ENCODE measurements at regions of chr7 and their contacts with region 1.

Region 1: DNA sequence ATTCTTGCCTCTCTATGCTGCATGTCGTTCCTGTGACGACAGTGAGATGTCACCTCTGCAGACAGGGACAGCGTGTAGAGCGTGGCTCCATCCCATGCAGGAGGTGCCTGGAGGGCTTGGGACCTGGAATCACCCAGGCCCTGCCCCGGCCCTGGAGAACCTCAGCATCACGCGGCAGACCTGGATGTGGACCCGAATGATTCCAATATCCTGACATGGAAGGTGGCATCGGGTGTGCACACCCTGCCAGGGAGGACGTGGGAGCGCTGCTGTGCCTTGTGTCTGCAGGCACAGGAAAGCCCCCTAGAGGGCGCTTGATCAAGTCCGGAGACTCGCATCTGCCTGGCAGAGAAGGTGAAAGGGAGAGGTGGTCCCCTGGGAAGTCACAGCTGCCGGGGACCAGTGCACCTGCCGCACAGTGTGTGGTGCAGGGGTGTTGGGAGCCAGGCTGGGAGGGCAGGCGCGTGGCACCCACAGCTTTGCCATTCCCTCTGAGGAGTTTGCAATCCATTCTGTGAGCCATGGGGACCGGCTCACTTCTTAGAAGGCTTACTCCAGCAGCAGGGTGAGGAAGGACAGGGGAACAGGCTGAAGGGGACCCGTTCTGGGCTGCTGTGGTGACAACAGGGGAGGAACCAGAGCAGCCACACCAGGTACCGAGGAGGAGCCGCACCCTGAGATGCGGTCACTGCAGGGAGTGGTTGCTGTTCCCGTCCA is 45.2 kb upstream of the EN2 start:
- DNase-seq: peak in 9 of 10 donors; percentile 37 to 78 (median 53)
- H3K4me3 ChIP-seq: no peak overlapping the region
- H3K27ac ChIP-seq: no peak overlapping the region
- H3K27me3 ChIP-seq: peaks cover 0 to 52% (median 17%) of the 10 kb centered on the region in 45 donors
- CTCF ChIP-seq: peak in 55 of 56 donors; percentile 20 to 80 (median 67)

Region 2: DNA sequence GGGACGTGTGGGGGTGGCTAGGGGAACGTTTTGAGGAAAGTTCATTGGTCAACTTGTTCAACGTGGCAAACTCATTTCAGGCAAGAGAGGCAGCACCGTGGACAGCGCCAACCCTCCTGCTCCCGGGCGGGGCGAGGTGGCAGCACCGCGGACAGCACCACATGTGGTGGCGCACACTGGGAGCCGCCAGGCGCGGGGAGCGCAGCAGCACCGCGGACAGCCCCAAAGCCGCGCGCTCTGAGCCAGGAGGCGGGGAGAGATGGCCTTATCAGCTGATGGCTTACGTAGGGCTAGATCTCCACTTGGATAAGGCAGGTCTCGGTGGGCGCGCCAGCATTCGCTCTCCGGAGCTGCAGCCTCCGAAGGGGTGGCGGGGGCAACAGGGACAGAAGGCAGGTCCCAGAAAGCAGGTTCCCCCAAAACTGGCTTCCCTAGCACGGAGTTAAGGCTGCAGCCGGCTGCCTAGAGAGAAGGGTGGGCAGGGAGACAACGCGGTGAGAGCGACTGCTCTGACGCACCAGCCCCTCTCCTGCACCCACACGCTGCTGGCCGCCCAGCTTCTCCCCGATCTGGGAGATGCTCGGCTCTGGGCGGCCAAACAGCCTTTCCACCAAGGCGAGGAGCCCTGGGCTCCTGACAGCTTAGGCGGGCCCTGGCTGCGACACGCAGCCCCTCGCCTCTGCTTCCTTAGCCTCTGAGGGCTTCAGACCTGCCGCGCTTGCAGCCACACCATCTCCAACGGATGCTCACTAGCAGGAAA is 342.5 kb before region 1 on chr7 and contains the start of gene HTR5A:
- intact Hi-C with region 1: no loop called
- DNase-seq: peak; percentile 43 to 80 (median 70)
- H3K4me3 ChIP-seq: peak within 1 kb of the TSS in 58 of 59 donors; percentile 10 to 70 (median 50)
- H3K27ac ChIP-seq: peak within 1 kb of the TSS in 50 of 59 donors; percentile 10 to 87 (median 72)
- H3K27me3 ChIP-seq: peaks cover 0 to 32% (median 7%) of the 10 kb centered on the region in 45 donors
- CTCF ChIP-seq: peak in 28 of 56 donors; percentile 7 to 38 (median 20)
- total RNA-seq, gene HTR5A: 4.8 to 30.1 (median 15.6) TPM

Region 3: GRCh38 chr7:155456738-155457564 is 44.3 kb after region 1 on chr7:
- intact Hi-C with region 1: loop called in 1 of 2 experiments (anchors 5 kb)
- DNase-seq: peak; percentile 67 to 95 (median 78)
- H3K4me3 ChIP-seq: peak overlapping the region; percentile 23 to 76 (median 59)
- H3K27ac ChIP-seq: peak overlapping the region in 10 of 59 donors; percentile 10 to 97 (median 54)
- H3K27me3 ChIP-seq: peaks cover 21 to 96% (median 95%) of the 10 kb centered on the region in 45 donors
- CTCF ChIP-seq: no peak